K562 (cell line): ENCODE measurements at regions of chr4 and their contacts with region 1.

Region 1: DNA sequence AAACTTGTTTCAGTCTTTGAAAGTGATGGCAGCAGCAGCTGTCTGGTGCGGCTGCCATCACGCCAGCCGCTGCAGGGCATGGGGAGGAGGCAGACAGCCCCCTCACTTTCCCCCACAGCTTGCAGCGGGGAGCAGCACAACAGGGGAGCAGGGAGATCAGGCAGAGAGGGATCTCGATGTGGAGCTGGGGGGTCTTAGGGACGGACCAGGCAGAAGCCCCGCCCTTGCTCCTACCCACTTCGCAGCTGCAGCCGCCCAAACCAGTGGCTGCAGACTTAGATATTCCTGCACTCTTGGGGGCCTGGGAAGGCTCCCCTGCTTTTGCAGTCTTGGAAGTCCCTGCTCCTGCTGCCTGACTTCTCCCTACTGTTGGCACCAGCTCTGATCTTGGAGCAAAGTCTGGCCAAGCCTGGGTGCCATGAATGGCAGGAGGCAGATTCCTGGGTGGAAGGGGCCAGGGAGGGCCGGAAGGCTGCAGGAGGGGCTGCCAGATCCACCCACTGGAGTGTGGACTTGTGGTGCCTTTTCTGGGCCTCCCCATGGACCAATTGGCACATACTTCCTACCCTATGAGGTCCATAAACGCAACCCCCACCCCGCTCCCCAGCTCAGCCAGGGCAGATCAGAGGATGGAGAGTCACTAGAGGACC is 14.0 kb upstream of the MFAP3L start:
- DNase-seq: no peak
- ATAC-seq: no peak
- H3K4me3 ChIP-seq: no peak overlapping the region
- H3K27ac ChIP-seq: no peak overlapping the region
- H3K4me1 ChIP-seq: no peaks in the 10 kb centered on the region
- H3K27me3 ChIP-seq: no peaks in the 10 kb centered on the region; a peak in 2 of 5 replicates
- CTCF ChIP-seq: no peak
- EP300 ChIP-seq: no peak
- POLR2A ChIP-seq: no peak
- RAD21 ChIP-seq: no peak

Region 2: DNA sequence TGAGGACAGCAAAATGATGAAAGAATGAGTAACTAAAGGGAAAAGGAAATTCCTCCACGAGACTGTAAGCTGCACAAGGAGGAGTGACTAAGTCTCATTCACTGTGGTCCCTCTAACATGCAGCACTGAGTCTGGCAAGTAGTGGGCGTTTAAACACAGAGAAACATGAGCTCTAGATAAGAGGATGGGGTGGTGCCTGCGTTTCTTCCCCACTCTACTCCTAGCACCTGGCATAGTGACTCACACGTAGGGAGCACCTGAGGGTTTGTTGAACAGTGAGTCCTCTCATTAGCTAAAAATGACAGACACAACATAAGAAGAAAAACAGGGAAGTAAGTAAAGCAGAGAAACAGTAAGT is 924.3 kb before region 1 on chr4:
- CTCF ChIA-PET with region 1: no interaction called
- POLR2A ChIA-PET with region 1: no interaction called
- in situ Hi-C with region 1: no loop called
- intact Hi-C with region 1: no loop called
- DNase-seq: peak in 1 of 4 experiments; percentile 19
- ATAC-seq: peak; percentile 82
- H3K4me3 ChIP-seq: no peak overlapping the region
- H3K27ac ChIP-seq: no peak overlapping the region
- H3K4me1 ChIP-seq: no peaks in the 10 kb centered on the region; a peak in 1 of 5 replicates
- H3K27me3 ChIP-seq: peaks cover 0 to 8% of the 10 kb centered on the region in 2 experiments; a peak in 2 of 5 replicates
- CTCF ChIP-seq: 0 out of 6 replicates have a peak, but pooled peaks of 1 of the 3 experiments have one; percentile 9
- EP300 ChIP-seq: no peak
- POLR2A ChIP-seq: no peak
- RAD21 ChIP-seq: no peak; a peak in 1 of 4 replicates

Region 3: GRCh38 chr4:169675825-169676224 is 364.3 kb before region 1 on chr4:
- CTCF ChIA-PET with region 1: no interaction called
- POLR2A ChIA-PET with region 1: no interaction called
- in situ Hi-C with region 1: no loop called
- intact Hi-C with region 1: no loop called
- DNase-seq: no peak
- ATAC-seq: no peak
- H3K4me3 ChIP-seq: no peak overlapping the region
- H3K27ac ChIP-seq: no peak overlapping the region
- H3K4me1 ChIP-seq: no peaks in the 10 kb centered on the region
- H3K27me3 ChIP-seq: no peaks in the 10 kb centered on the region
- CTCF ChIP-seq: no peak
- EP300 ChIP-seq: no peak
- POLR2A ChIP-seq: no peak
- RAD21 ChIP-seq: no peak

Region 4: GRCh38 chr4:169810325-169811323 is 229.5 kb before region 1 on chr4:
- CTCF ChIA-PET with region 1: no interaction called
- POLR2A ChIA-PET with region 1: no interaction called
- in situ Hi-C with region 1: loop called (anchors 5 kb)
- intact Hi-C with region 1: no loop called
- DNase-seq: peak; percentile 63 to 73 (median 68)
- ATAC-seq: peak; percentile 90
- H3K4me3 ChIP-seq: no peak overlapping the region
- H3K27ac ChIP-seq: no peak overlapping the region
- H3K4me1 ChIP-seq: no peaks in the 10 kb centered on the region
- H3K27me3 ChIP-seq: peaks cover 0 to 4% of the 10 kb centered on the region in 2 experiments; a peak in 1 of 5 replicates
- CTCF ChIP-seq: peak; percentile 64 to 86 (median 74); a peak in 5 of 6 replicates
- EP300 ChIP-seq: no peak
- POLR2A ChIP-seq: no peak
- RAD21 ChIP-seq: peak; percentile 80

Region 5: GRCh38 chr4:169841776-169842175 is 198.4 kb before region 1 on chr4:
- CTCF ChIA-PET with region 1: no interaction called
- POLR2A ChIA-PET with region 1: no interaction called
- in situ Hi-C with region 1: no loop called
- intact Hi-C with region 1: no loop called
- DNase-seq: no peak
- ATAC-seq: no peak
- H3K4me3 ChIP-seq: no peak overlapping the region
- H3K27ac ChIP-seq: no peak overlapping the region
- H3K4me1 ChIP-seq: no peaks in the 10 kb centered on the region
- H3K27me3 ChIP-seq: no peaks in the 10 kb centered on the region
- CTCF ChIP-seq: no peak
- EP300 ChIP-seq: no peak
- POLR2A ChIP-seq: no peak
- RAD21 ChIP-seq: no peak

Region 6: DNA sequence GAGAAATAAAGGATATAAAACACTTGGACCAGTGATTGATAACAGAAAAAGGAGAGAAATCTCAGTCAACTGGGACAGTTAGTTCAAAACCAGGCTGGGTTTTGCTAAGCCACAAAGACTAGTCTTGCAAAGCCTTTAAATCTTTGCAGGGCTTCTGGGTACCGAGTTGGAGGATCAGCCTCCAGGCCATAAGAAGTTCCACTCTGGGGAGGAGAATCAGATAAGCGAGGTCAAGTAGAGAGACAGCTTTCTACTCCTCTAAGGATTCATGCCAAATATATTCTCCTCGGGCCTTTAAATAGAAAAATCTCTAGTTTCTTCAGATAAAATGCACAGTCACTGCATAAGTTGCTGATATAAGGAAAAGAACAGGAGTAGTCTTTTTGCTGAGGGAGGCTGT is 106.6 kb before region 1 on chr4:
- CTCF ChIA-PET with region 1: no interaction called
- POLR2A ChIA-PET with region 1: no interaction called
- in situ Hi-C with region 1: no loop called
- intact Hi-C with region 1: no loop called
- DNase-seq: no peak
- ATAC-seq: no peak
- H3K4me3 ChIP-seq: no peak overlapping the region
- H3K27ac ChIP-seq: no peak overlapping the region
- H3K4me1 ChIP-seq: peaks cover 0 to 2% of the 10 kb centered on the region in 2 experiments; a peak in 2 of 5 replicates
- H3K27me3 ChIP-seq: no peaks in the 10 kb centered on the region; a peak in 1 of 5 replicates
- CTCF ChIP-seq: no peak
- EP300 ChIP-seq: no peak
- POLR2A ChIP-seq: no peak
- RAD21 ChIP-seq: no peak